ENCODE measurements at regions of chr3 and their contacts with region 1.

Region 1: DNA sequence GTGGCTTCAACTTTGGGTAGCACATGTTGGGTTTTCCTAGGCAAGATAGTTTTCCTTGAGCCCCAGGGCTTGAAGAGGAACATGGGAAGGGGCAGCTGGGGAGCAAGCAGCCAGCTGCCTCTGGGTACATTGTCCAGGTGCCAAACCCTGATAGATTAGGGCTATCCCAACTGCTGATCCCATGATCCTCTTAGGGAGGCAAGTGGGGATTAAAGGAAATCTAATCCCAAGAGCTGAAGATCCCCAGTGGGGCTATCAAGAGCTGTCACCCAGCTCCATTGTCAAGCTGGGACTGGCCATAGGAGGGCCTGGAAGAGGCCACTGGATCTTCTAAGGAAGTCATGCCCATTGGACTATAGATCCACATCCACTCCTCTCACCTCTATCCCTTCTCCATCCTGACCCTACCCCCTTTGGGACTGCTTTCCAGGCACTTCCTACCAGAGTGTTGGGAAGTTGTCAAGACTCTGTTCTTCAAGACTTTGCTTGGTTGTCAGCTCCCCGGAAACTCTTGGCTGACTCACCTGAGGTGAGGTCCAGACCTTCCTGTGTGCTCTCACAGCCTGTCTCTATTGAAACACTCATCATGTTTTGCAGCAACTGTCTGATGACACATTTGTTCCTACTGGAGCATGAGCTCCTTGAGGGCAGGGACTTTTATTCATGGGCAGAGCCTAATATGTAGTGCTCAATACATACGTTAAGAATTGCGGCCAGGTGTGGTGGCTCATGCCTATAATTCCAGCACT is 5.9 kb downstream of the CAMK2N2 start:
- DNase-seq: peak; percentile 62
- H3K4me3 Mint-ChIP-seq: no peak overlapping the region
- H3K27ac Mint-ChIP-seq: no peak overlapping the region
- H3K4me1 Mint-ChIP-seq: peaks cover 10% of the 10 kb centered on the region
- H3K27me3 Mint-ChIP-seq: no peaks in the 10 kb centered on the region
- CTCF ChIP-seq: no peak

Region 2: DNA sequence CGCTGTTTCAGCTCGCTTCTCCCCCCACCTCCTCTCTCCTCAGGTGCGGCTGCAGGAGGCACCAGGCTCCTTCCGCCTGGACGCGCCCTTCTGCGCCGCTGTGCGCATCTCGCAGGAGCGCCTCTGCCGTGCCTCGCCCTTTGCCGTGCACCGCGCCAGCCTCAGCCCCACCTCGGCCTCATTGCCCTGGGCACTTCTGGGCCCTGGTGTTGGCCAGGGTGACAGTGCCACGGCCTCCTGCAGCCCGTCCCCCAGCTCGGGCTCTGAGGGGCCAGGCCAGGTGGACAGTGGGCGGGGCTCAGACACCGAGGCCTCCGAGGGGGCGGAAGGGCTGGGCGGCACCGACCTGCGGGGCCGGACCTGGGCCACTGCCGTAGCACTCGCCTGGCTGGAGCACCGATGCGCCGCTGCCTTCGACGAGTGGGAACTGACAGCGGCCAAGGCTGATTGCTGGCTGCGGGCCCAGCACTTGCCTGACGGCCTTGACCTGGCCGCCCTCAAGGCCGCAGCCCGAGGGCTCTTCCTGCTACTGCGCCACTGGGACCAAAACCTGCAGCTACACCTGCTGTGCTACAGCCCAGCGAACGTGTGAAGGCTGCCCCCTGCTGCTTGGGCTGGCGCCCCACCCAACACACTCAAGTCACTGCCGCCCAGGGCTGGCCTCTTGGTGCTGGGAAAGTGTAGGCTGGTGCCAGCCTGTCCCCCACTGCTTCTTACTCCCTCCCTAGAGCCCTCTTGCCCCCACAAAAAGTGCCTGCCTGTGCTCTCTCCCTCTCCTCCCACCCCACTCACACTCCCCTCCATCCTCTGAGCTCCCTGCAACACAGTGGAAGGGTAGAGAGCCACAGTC is 13.8 kb before region 1 on chr3:
- CTCF ChIA-PET with region 1: interaction called, 6 read pairs
- POLR2A ChIA-PET with region 1: interaction called, 11 read pairs
- intact Hi-C with region 1: no loop called
- DNase-seq: peak; percentile 12
- H3K4me3 Mint-ChIP-seq: no peak overlapping the region
- H3K27ac Mint-ChIP-seq: no peak overlapping the region
- H3K4me1 Mint-ChIP-seq: peaks cover 8% of the 10 kb centered on the region
- H3K27me3 Mint-ChIP-seq: no peaks in the 10 kb centered on the region
- CTCF ChIP-seq: peak; percentile 12

Measured in MCF 10A (cell line).